A673 (cell line): ENCODE measurements at regions of chr9 and their contacts with region 1.

Region 1: DNA sequence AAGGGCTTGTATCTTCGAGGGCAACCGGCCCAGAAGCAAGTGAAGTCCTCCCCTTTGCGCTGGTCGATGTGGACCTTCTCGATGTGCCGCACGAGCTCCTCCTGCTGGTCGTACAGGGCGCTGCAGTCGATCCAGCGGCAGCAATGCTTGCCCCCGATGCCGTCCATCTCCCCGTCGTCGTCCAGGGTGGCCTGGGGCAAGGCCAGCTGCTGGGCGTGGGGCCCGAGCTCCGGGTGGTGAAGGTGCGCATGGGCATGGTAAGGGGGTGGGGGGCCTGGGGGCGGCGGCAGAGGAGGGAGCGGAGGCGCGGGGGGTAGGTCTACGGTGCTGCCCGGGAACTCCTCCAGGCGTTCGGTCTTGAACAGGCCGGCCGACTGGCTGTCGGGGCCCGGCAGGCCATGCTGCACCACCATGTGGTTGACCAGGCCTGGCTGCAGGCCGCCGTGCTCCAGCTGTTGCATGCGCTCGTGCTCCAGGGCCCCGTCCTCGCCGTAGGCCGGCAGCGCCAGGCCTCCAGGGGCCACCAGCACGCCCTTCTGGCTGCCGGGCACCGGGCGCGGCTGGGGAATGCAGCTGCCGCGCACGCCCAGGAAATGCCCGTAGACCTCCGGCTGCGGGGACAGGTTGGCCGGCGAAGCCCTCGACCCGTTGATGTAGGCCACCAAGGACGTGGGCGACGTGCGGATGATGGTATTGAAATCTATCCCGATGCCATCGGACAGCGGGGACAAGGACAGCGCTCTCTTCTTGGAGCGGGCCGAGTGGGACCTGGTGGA is 181.8 kb downstream of the GLIS3 start:
- DNase-seq: peak; percentile 77
- H3K4me3 ChIP-seq: no peak overlapping the region
- H3K27ac ChIP-seq: no peak overlapping the region
- H3K4me1 ChIP-seq: no peaks in the 10 kb centered on the region
- H3K27me3 ChIP-seq: no peaks in the 10 kb centered on the region
- CTCF ChIP-seq: peak; percentile 95

Region 2: DNA sequence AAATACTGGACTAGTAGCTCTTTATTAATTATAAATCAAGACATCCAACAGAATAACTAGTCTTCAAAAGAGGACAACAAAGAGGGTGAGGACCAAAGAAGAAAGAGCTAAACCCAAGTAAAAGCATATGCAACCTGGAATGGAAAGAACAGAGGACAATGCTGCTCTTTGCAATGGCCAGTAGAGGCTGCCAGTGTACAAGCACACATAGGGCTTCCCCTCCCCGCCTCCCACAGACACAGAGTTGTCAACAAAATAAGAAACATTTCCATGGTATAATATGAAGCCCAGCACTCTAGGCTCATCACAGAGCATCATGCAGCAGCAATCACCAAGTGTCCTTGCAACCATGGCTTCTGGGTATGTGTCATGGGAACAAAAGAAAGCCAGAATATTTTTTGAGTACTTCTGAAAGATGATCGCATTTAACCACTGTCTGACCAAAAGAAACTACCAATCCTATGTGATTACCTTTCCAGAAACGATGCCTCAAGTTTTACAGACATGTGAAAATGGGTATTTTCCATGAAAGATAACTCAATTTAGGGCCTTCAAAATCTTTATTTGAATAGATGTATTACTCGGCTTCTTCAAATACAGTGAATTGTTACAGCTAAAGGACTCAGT is 650.3 kb before region 1 on chr9:
- CTCF ChIA-PET with region 1: no interaction called
- POLR2A ChIA-PET with region 1: no interaction called
- intact Hi-C with region 1: loop called (anchors 5 kb)
- DNase-seq: peak; percentile 81
- H3K4me3 ChIP-seq: no peak overlapping the region
- H3K27ac ChIP-seq: no peak overlapping the region
- H3K4me1 ChIP-seq: peaks cover 13% of the 10 kb centered on the region
- H3K27me3 ChIP-seq: no peaks in the 10 kb centered on the region
- CTCF ChIP-seq: peak; percentile 95

Region 3: GRCh38 chr9:3777137-3777536 is 340.9 kb before region 1 on chr9:
- CTCF ChIA-PET with region 1: no interaction called
- POLR2A ChIA-PET with region 1: no interaction called
- intact Hi-C with region 1: no loop called
- DNase-seq: no peak
- H3K4me3 ChIP-seq: no peak overlapping the region
- H3K27ac ChIP-seq: no peak overlapping the region
- H3K4me1 ChIP-seq: no peaks in the 10 kb centered on the region
- H3K27me3 ChIP-seq: no peaks in the 10 kb centered on the region
- CTCF ChIP-seq: no peak